ENCODE measurements at regions of chr1 and their contacts with region 1.

Region 1: GRCh38 chr1:210328746-210329503 is at the start of gene HHAT:
- DNase-seq: no peak
- ATAC-seq: peak; percentile 84
- H3K4me3 ChIP-seq: peak within 1 kb of the TSS; percentile 77
- H3K27ac ChIP-seq: peak within 1 kb of the TSS; percentile 73
- H3K4me1 ChIP-seq: peaks cover 29% of the 10 kb centered on the region
- H3K27me3 ChIP-seq: no peaks in the 10 kb centered on the region
- CTCF ChIP-seq: peak in 1 of 3 experiments; percentile 12; a peak in 1 of 6 replicates
- EP300 ChIP-seq: no peak
- POLR2A ChIP-seq: peak; percentile 82
- RAD21 ChIP-seq: no peak
- polyA plus RNA-seq, gene HHAT: 1.2 to 1.5 TPM

Region 2: GRCh38 chr1:209755926-209756614 is 572.9 kb before region 1 on chr1 and contains the start of gene TRAF3IP3:
- CTCF ChIA-PET with region 1: interaction called, 3 read pairs
- POLR2A ChIA-PET with region 1: no interaction called
- RAD21 ChIA-PET with region 1: no interaction called
- SMC1A ChIA-PET with region 1: no interaction called
- in situ Hi-C with region 1: no loop called
- intact Hi-C with region 1: loop called (anchors 10 kb)
- DNase-seq: peak; percentile 83
- ATAC-seq: peak; percentile 86
- H3K4me3 ChIP-seq: peak within 1 kb of the TSS; percentile 73
- H3K27ac ChIP-seq: peak within 1 kb of the TSS; percentile 92
- H3K4me1 ChIP-seq: peaks cover 53% of the 10 kb centered on the region
- H3K27me3 ChIP-seq: no peaks in the 10 kb centered on the region
- CTCF ChIP-seq: no peak
- EP300 ChIP-seq: 0 out of 4 replicates have a peak, but pooled peaks of 1 of the 2 experiments have one; percentile 13
- POLR2A ChIP-seq: peak; percentile 84
- RAD21 ChIP-seq: no peak
- polyA plus RNA-seq, gene TRAF3IP3: 117 to 121 TPM

Region 3: DNA sequence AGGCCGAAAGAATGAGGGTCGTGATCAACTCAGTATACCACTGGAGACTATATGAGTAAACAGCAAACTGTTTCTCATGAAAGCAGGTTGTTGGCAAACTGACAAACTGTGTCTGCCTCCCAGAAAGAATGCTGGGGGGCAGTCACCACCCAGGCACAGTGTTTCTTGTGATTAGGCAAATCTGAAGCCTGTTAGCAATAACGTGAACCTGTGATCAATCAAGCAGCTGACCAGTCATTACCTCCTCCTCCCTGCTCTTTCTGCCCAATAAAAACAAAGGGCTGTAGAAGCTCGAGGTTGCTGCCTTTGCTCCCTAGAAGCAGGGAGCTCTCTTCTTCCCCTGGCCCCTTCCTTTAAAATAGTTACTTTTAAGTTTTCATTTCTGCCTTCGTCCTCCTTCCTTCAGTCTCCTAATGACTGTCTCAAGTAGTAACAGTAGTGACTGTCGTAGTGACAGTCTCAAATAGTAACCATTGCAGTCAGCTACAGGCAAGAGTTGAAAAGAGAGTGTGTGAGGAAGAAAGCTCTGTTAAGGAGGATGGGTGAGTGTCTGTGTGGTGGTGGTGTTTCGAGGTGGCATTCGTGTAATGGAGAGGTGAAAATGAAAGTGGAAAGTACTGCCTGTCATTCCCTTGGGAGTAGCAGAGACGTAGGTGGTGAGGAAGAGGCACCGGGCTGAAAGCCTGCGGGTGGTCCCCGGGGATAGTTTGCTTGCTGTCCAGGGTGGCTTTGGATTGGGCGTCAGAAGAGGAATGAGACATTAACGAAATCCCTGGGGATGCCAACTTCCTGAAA is 14.3 kb after region 1 on chr1:
- CTCF ChIA-PET with region 1: interaction called, 43 read pairs
- POLR2A ChIA-PET with region 1: interaction called, 48 read pairs
- RAD21 ChIA-PET with region 1: interaction called, 82 read pairs
- SMC1A ChIA-PET with region 1: interaction called, 199 read pairs
- in situ Hi-C with region 1: no loop called
- intact Hi-C with region 1: loop called (anchors 2 kb)
- DNase-seq: peak; percentile 72
- ATAC-seq: peak; percentile 75
- H3K4me3 ChIP-seq: peak overlapping the region; percentile 59
- H3K27ac ChIP-seq: peak overlapping the region; percentile 53
- H3K4me1 ChIP-seq: peaks cover 23% of the 10 kb centered on the region
- H3K27me3 ChIP-seq: no peaks in the 10 kb centered on the region
- CTCF ChIP-seq: no peak
- EP300 ChIP-seq: peak; percentile 70; a peak in 2 of 4 replicates
- POLR2A ChIP-seq: no peak
- RAD21 ChIP-seq: no peak

Region 4: DNA sequence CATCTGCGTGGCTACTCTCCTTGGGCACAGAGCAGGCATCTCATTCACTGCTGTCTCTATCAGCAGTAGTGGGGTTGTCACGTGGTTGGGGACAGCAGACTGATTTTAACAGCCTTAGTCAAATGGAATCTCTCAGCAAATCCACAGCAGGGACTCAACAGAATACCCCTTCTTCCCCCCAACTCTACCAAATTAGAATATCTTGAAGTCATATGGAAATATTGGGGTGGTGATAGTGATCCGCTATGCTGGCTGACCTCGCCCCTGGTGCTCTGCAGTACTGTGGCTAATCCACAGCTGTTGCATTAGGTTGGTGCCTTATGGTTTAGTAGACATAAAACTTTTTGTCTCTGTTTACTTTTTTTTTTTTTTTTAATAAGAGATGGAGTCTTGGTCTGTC is 23.6 kb after region 1 on chr1:
- CTCF ChIA-PET with region 1: interaction called, 8 read pairs
- POLR2A ChIA-PET with region 1: interaction called, 8 read pairs
- RAD21 ChIA-PET with region 1: no interaction called
- SMC1A ChIA-PET with region 1: interaction called, 199 read pairs
- in situ Hi-C with region 1: no loop called
- intact Hi-C with region 1: loop called (anchors 2 kb)
- DNase-seq: no peak
- ATAC-seq: peak; percentile 40; the same call in 1 of the 3 replicates
- H3K4me3 ChIP-seq: no peak overlapping the region
- H3K27ac ChIP-seq: no peak overlapping the region
- H3K4me1 ChIP-seq: no peaks in the 10 kb centered on the region
- H3K27me3 ChIP-seq: no peaks in the 10 kb centered on the region
- CTCF ChIP-seq: no peak
- EP300 ChIP-seq: no peak
- POLR2A ChIP-seq: no peak
- RAD21 ChIP-seq: no peak

Region 5: GRCh38 chr1:210360852-210361477 is 32.0 kb after region 1 on chr1:
- CTCF ChIA-PET with region 1: interaction called, 16 read pairs
- POLR2A ChIA-PET with region 1: interaction called, 4 read pairs
- RAD21 ChIA-PET with region 1: interaction called, 25 read pairs
- SMC1A ChIA-PET with region 1: interaction called, 29 read pairs
- in situ Hi-C with region 1: no loop called
- intact Hi-C with region 1: no loop called
- DNase-seq: no peak
- ATAC-seq: peak; percentile 96
- H3K4me3 ChIP-seq: no peak overlapping the region
- H3K27ac ChIP-seq: no peak overlapping the region
- H3K4me1 ChIP-seq: no peaks in the 10 kb centered on the region
- H3K27me3 ChIP-seq: no peaks in the 10 kb centered on the region
- CTCF ChIP-seq: peak; percentile 44 to 71 (median 57)
- EP300 ChIP-seq: peak in 1 of 2 experiments; percentile 36; a peak in 1 of 4 replicates
- POLR2A ChIP-seq: no peak
- RAD21 ChIP-seq: peak; percentile 64

Region 6: DNA sequence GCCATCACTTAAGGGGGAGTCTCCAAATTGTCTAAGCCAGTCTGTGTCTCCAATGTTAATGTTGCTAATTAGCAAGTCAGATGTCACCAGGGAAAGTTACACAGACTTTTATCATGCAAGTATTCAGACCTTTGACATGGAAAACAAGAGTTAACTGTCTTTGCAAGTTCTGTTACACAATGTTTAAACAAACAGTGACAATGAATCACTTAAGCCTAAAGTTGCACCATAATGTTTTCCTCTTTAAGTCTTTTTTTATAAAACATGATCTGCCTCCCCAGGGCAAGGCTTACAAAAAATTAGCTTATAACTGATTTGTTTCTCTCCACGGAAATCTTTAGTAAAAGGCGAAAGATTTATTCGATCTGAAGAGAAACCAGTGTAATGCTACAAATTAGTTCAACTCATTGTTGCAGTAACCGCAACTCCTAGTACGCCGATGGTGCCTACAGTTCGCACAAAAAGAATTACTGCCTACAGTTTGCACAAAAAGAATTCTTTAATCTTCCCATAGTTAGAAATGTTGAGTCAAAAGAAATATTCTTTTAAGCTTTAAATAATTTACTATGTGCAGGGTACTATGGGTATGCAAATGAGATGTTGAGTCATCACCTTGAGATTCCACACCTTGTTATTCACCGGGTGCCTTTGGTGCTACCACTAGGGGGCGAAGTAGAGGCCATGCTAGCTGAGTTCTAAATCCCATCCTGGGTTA is 45.1 kb after region 1 on chr1:
- CTCF ChIA-PET with region 1: interaction called, 25 read pairs
- POLR2A ChIA-PET with region 1: interaction called, 13 read pairs
- RAD21 ChIA-PET with region 1: interaction called, 18 read pairs
- SMC1A ChIA-PET with region 1: interaction called, 44 read pairs
- in situ Hi-C with region 1: no loop called
- intact Hi-C with region 1: loop called (anchors 1 kb)
- DNase-seq: peak; percentile 81
- ATAC-seq: peak; percentile 84
- H3K4me3 ChIP-seq: no peak overlapping the region
- H3K27ac ChIP-seq: peak overlapping the region; percentile 40; the same call in 1 of the 2 replicates
- H3K4me1 ChIP-seq: no peaks in the 10 kb centered on the region
- H3K27me3 ChIP-seq: no peaks in the 10 kb centered on the region
- CTCF ChIP-seq: peak; percentile 81 to 90 (median 87)
- EP300 ChIP-seq: no peak
- POLR2A ChIP-seq: peak; percentile 82
- RAD21 ChIP-seq: peak; percentile 38

Region 7: GRCh38 chr1:210394281-210394821 is 65.4 kb after region 1 on chr1:
- CTCF ChIA-PET with region 1: interaction called, 14 read pairs
- POLR2A ChIA-PET with region 1: interaction called, 13 read pairs
- RAD21 ChIA-PET with region 1: interaction called, 69 read pairs
- SMC1A ChIA-PET with region 1: interaction called, 18 read pairs
- in situ Hi-C with region 1: no loop called
- intact Hi-C with region 1: no loop called
- DNase-seq: peak; percentile 80
- ATAC-seq: peak; percentile 80
- H3K4me3 ChIP-seq: no peak overlapping the region
- H3K27ac ChIP-seq: no peak overlapping the region
- H3K4me1 ChIP-seq: no peaks in the 10 kb centered on the region
- H3K27me3 ChIP-seq: no peaks in the 10 kb centered on the region
- CTCF ChIP-seq: no peak
- EP300 ChIP-seq: peak; percentile 85 to 87; a peak in 3 of 4 replicates
- POLR2A ChIP-seq: no peak
- RAD21 ChIP-seq: no peak

Region 8: GRCh38 chr1:210455840-210456603 is 127.1 kb after region 1 on chr1:
- CTCF ChIA-PET with region 1: no interaction called
- POLR2A ChIA-PET with region 1: no interaction called
- RAD21 ChIA-PET with region 1: no interaction called
- SMC1A ChIA-PET with region 1: no interaction called
- in situ Hi-C with region 1: no loop called
- intact Hi-C with region 1: no loop called
- DNase-seq: no peak
- ATAC-seq: no peak
- H3K4me3 ChIP-seq: no peak overlapping the region
- H3K27ac ChIP-seq: no peak overlapping the region
- H3K4me1 ChIP-seq: no peaks in the 10 kb centered on the region
- H3K27me3 ChIP-seq: no peaks in the 10 kb centered on the region; a peak in 1 of 4 replicates
- CTCF ChIP-seq: no peak
- EP300 ChIP-seq: no peak
- POLR2A ChIP-seq: no peak
- RAD21 ChIP-seq: no peak